Left ventricle myocardium superior (tissue), 1 donor: ENCODE measurements at regions of chr7 and their contacts with region 1.

Region 1: DNA sequence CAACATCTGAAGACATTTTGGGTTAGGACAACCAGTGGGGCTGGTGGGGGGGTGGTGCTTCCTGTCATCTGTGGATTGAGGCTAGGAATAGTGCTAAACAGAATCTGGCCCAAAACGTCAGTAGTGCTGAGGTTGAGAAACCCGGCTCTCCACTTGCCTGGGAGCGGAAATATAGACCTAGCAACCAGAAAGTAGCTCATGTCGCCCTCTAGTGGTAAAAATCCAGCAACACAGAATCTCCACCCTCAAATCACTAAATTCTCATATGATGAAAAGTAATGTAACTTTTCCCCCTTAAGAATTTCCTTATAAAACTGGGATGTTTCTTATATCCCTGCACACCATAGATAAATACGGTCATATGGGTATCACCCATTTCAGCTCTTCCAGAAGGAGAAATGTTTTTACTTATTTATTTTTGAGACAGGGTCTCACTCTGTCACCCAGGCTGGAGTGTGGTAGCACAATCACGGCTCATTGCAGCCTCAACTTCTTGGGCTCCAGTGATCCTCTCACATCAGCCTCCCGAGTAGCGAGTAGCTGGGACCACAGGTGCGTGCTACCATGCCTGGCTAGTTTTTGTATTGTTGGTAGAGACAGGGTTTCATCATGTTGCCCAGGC is 34.4 kb downstream of the ZC3HAV1 start:
- DNase-seq: peak; percentile 50
- ATAC-seq: peak; percentile 94

Region 2: DNA sequence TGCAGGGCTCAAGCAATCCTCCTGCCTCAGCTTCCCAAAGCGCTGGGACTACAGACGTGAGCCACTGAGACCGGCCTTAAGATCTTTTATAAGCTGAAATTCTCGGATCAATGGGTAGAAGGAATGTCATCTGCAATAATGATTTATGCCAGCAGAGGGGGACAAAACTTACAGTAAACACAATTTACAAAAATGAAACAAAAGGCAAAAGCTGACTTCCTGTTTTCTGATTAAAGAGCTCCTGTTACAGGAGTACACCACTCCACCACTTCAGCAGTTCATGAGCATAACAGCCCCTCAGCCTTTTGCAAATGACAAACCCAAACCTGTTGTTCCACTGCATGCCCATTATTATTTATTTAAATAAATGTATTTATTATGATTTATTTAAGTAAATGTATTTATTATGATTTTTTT is 188.6 kb before region 1 on chr7:
- intact Hi-C with region 1: loop called (anchors 5 kb)
- DNase-seq: no peak
- ATAC-seq: no peak

Region 3: GRCh38 chr7:139016931-139017511 is 58.1 kb before region 1 on chr7:
- intact Hi-C with region 1: loop called (anchors 2 kb)
- DNase-seq: peak; percentile 59
- ATAC-seq: peak; percentile 78